HEK293 (cell line): ENCODE measurements at regions of chr12 and their contacts with region 1.

Region 1: DNA sequence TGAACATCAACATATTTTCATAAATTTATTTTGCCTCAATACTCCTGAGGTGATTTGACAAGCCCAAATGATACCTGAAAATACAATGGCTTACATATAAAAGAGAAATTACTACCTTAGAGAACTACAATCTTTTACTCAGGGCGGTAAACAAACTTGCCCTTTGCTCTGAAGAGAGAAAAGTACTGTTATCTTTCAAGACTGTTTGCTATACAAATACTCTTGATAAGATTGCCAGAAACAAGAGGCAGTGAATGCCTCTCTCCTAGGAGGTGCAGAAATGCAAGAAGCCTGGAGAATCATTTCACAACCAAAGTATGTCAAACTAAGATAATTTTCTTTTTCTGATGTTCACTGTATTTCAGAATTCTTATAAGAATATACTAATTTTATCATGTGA is 160.3 kb downstream of the ALX1 start:
- H3K4me3 ChIP-seq: no peak overlapping the region
- H3K27ac ChIP-seq: no peak overlapping the region
- H3K4me1 ChIP-seq: no peaks in the 10 kb centered on the region
- CTCF ChIP-seq: no peak

Region 2: GRCh38 chr12:85363382-85364190 is 76.7 kb before region 1 on chr12:
- CTCF ChIA-PET with region 1: no interaction called
- POLR2A ChIA-PET with region 1: no interaction called
- H3K4me3 ChIP-seq: no peak overlapping the region
- H3K27ac ChIP-seq: no peak overlapping the region
- H3K4me1 ChIP-seq: no peaks in the 10 kb centered on the region
- CTCF ChIP-seq: no peak

Region 3: DNA sequence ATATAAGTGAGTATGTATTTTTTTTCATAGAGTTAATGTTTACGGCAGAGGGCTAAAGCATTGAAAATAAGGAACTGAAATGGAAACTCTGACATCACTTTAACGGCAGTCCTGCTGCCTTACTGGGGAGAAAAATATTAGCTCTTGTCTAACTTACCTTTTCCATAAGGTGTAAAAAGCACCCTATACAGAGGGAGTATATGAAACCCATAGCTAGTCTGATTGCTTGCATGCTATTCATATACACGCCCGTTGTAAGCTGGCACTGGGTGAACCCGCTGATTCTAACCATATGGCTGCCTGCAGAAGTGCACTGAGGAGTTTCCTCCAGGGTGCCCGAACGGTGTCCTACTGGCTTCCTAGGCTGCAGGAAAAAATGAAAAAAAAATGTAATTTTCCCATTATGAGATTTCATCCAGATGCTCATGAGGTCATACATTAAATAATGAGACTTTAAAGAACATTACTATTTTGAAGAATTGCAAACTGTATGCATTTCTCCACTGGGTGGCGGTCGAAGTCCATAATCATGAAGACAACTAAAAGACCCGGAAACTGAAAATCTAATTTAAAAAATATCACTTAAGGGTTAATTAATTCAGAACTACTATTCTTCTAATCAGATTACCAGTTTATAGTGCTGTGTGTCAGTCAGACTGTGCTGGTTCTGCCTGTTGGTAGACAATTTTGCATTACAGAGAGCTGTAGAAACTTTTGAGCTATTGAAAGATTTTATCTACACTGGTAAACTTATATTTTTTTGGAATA is 15.5 kb before region 1 on chr12:
- CTCF ChIA-PET with region 1: interaction called, 12 read pairs
- POLR2A ChIA-PET with region 1: no interaction called
- H3K4me3 ChIP-seq: no peak overlapping the region
- H3K27ac ChIP-seq: no peak overlapping the region
- H3K4me1 ChIP-seq: no peaks in the 10 kb centered on the region
- CTCF ChIP-seq: peak; percentile 16; the same call in 1 of the 2 replicates

Region 4: GRCh38 chr12:85468356-85469157 is 28.3 kb after region 1 on chr12:
- CTCF ChIA-PET with region 1: no interaction called
- POLR2A ChIA-PET with region 1: no interaction called
- H3K4me3 ChIP-seq: peak overlapping the region; percentile 20
- H3K27ac ChIP-seq: no peak overlapping the region
- H3K4me1 ChIP-seq: 0 out of 2 replicates have a peak, but pooled peaks cover 2% of the 10 kb centered on the region
- CTCF ChIP-seq: peak; percentile 67; the same call in 1 of the 2 replicates

Region 5: GRCh38 chr12:85509857-85510256 is 69.6 kb after region 1 on chr12:
- CTCF ChIA-PET with region 1: no interaction called
- POLR2A ChIA-PET with region 1: no interaction called
- H3K4me3 ChIP-seq: no peak overlapping the region
- H3K27ac ChIP-seq: no peak overlapping the region
- H3K4me1 ChIP-seq: no peaks in the 10 kb centered on the region
- CTCF ChIP-seq: no peak